CD4-positive, alpha-beta T cell (primary cell): ENCODE measurements at regions of chr3 and their contacts with region 1.

Region 1: GRCh38 chr3:50568947-50569749 is at the start of gene HEMK1:
- DNase-seq: peak; percentile 84 to 97 (median 91)
- ATAC-seq: peak; percentile 64
- H3K4me3 ChIP-seq: peak within 1 kb of the TSS; percentile 77
- H3K4me3 Mint-ChIP-seq: peak within 1 kb of the TSS; percentile 97
- H3K27ac ChIP-seq: peak within 1 kb of the TSS; percentile 80 to 83
- H3K27ac Mint-ChIP-seq: peak within 1 kb of the TSS; percentile 89
- H3K4me1 ChIP-seq: peaks cover 79% of the 10 kb centered on the region
- H3K4me1 Mint-ChIP-seq: peaks cover 78% of the 10 kb centered on the region
- H3K27me3 ChIP-seq: no peaks in the 10 kb centered on the region
- H3K27me3 Mint-ChIP-seq: no peaks in the 10 kb centered on the region
- CTCF ChIP-seq: no peak
- total RNA-seq, gene HEMK1: 12.4 to 14.6 TPM

Region 2: DNA sequence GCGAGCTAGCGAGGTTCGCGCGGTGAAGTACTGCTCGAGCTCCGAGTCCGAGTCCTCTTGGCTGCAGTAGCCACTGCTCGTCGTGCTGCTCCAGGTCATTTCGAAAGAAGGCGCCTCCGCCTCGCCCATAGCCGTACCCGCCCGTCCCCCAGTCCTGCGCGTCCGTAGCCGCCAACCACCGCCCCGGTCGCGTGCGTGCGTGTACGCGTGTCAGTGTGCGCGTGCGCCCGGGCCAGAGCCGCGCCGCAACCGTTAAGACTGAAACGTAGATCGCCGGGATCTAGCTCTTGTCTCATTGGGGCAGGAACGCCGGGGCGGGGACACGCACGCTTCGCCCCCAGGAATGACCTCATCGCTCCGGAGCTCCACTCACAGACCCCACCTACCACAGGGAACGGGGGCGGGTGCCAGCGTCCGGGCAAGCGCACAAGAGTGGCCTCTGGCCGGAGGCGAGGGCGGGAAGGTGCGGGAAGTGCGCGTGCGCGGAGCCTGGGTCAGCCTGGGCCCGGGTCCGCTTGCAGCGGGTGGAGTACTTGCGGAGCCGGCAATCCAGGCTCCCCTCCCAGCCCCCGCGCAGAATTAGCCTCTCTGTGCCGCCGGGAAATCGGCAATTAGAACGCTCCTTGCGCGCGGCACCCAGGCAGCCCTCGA is 231.8 kb before region 1 on chr3:
- CTCF ChIA-PET with region 1: no interaction called
- POLR2A ChIA-PET with region 1: interaction called, 20 read pairs
- intact Hi-C with region 1: no loop called
- DNase-seq: peak; percentile 81 to 98 (median 90)
- ATAC-seq: peak; percentile 77
- H3K4me3 ChIP-seq: peak overlapping the region; percentile 93
- H3K4me3 Mint-ChIP-seq: peak overlapping the region; percentile 96
- H3K27ac ChIP-seq: peak overlapping the region; percentile 95 to 96
- H3K27ac Mint-ChIP-seq: peak overlapping the region; percentile 95
- H3K4me1 ChIP-seq: peaks cover 85% of the 10 kb centered on the region
- H3K4me1 Mint-ChIP-seq: peaks cover 71% of the 10 kb centered on the region
- H3K27me3 ChIP-seq: no peaks in the 10 kb centered on the region
- H3K27me3 Mint-ChIP-seq: no peaks in the 10 kb centered on the region
- CTCF ChIP-seq: no peak

Region 3: DNA sequence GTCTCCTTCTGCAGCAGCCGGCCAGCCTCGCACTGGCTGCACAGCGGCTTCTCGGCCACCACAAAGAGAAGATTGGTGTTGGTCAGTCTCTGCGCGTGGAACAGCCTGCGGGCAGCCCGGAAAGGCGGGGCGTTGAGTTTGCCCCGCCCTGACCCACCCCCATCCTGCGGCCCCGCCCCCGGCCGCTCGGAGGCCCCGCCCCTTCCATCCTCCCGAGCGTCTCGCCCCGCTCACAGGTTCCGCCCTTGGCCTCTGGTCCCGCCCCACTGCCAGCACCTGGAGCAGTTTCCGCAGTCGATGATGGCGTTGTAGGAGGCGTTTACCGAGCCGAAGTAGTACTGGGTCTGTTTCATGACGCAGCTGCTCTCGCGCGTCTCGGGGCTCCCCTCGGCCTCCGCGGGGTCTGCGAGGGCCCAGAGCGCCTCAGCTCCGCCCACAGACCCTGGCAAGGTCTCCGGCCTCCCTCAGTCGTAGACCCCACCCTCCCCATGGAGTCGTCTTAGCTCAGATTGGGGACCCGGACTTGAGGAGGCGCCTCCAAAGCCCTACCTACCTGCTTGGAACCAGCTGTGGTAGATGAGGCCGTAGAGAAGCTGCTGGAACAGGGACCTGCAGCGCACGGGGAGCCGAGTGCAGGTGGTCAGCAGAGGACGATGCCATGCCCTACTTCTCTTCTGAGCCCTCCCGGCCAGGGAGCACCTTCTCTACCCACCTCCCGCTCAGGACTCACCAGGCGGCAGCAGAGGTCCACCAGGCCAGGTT is 203.9 kb before region 1 on chr3:
- CTCF ChIA-PET with region 1: no interaction called
- POLR2A ChIA-PET with region 1: interaction called, 4 read pairs
- intact Hi-C with region 1: loop called in 1 of 2 experiments (anchors 2 kb)
- DNase-seq: peak; percentile 92 to 97 (median 95)
- ATAC-seq: peak; percentile 95
- H3K4me3 ChIP-seq: peak overlapping the region; percentile 73
- H3K4me3 Mint-ChIP-seq: peak overlapping the region; percentile 94
- H3K27ac ChIP-seq: peak overlapping the region; percentile 69 to 81
- H3K27ac Mint-ChIP-seq: peak overlapping the region; percentile 98
- H3K4me1 ChIP-seq: peaks cover 30% of the 10 kb centered on the region
- H3K4me1 Mint-ChIP-seq: peaks cover 25% of the 10 kb centered on the region
- H3K27me3 ChIP-seq: no peaks in the 10 kb centered on the region
- H3K27me3 Mint-ChIP-seq: no peaks in the 10 kb centered on the region
- CTCF ChIP-seq: no peak

Region 4: DNA sequence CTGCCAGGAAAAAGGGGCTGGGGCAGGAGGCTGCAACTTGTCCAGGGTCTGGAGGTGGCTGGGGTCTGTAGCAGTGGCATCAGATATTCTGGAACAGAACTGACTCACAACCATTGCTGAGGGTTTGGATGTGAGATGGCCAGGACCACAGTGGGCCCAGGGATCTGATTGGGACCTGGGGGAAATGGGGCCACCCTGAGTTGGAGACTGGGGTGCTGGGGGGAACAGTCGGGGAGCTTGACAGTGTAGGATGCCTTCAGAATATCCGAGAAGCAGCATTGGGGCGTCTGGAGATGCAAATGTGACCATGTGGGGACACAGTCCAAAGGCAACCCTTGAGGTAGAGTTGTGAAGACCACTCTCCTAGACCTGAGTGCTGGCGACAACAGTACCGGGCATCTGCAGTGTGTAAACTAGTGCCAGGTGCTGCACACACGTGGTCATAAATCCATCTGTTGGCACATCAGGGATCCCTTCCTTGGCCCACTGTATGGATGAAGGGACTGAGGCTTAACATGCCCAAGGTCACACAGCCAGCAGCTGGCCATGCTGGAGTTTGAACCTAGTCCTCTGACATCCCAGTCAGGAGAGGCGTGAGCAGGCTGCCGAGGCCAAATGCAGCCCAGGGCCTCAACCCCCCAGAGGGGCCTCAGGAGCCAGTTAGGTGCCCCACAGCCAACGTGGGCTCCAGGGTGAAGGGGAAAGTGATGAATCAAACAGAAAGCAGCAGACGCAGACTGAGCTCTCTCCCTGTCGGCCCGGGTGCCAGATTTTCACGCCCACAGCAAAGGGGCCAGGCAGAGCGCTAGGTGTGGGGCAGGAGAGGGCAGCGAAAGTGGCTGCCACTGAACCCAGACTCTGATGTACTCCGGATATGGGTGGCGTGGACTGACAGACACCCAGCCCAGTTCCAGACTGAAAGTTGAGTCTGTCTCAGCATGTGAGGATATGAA is 18.9 kb after region 1 on chr3:
- CTCF ChIA-PET with region 1: interaction called, 24 read pairs
- POLR2A ChIA-PET with region 1: interaction called, 69 read pairs
- intact Hi-C with region 1: loop called (anchors 2 kb)
- DNase-seq: peak in 6 of 14 experiments; percentile 45 to 75 (median 55)
- ATAC-seq: peak; percentile 45
- H3K4me3 ChIP-seq: no peak overlapping the region
- H3K4me3 Mint-ChIP-seq: peak overlapping the region; percentile 42
- H3K27ac ChIP-seq: peak overlapping the region in 1 of 2 donors; percentile 58
- H3K27ac Mint-ChIP-seq: peak overlapping the region; percentile 86
- H3K4me1 ChIP-seq: peaks cover 88% of the 10 kb centered on the region
- H3K4me1 Mint-ChIP-seq: peaks cover 49% of the 10 kb centered on the region
- H3K27me3 ChIP-seq: no peaks in the 10 kb centered on the region
- H3K27me3 Mint-ChIP-seq: no peaks in the 10 kb centered on the region
- CTCF ChIP-seq: no peak

Region 5: DNA sequence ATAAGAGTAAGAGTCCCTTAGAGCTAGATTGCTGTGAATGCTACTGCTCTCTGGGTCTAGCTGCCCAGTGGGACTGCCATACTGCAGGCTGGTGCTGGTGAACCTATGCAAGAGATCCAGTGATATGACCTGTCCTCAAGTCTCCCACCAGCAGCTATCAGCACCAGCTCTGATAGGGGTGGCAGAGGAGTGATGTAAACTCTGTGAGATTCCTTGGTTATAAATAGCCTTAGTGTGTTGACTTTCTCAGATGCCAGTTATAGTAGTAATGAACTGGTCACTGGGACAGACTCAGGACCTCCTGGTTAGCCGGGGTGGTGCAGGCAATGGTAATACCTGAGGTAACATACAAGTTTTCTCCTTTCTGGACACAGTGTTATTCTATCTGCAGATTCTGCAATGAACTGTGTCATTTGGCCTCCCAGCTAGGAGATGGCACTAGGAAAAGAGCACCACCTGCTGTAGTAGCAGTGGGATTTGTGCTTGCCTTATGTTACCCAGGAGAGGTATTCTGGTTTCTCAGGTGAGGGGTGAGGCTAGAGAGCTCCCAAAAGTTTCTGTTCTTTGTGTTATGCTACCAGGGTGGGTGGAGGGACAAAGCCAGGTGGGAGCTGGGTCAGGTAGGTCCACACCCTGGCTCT is 621.2 kb after region 1 on chr3:
- CTCF ChIA-PET with region 1: no interaction called
- POLR2A ChIA-PET with region 1: no interaction called
- intact Hi-C with region 1: no loop called
- DNase-seq: peak in 3 of 14 experiments; percentile 16 to 20 (median 17)
- ATAC-seq: no peak
- H3K4me3 ChIP-seq: no peak overlapping the region
- H3K4me3 Mint-ChIP-seq: no peak overlapping the region
- H3K27ac ChIP-seq: no peak overlapping the region
- H3K27ac Mint-ChIP-seq: no peak overlapping the region
- H3K4me1 ChIP-seq: no peaks in the 10 kb centered on the region
- H3K4me1 Mint-ChIP-seq: peaks cover 25% of the 10 kb centered on the region
- H3K27me3 ChIP-seq: no peaks in the 10 kb centered on the region
- H3K27me3 Mint-ChIP-seq: no peaks in the 10 kb centered on the region
- CTCF ChIP-seq: no peak

Region 6: DNA sequence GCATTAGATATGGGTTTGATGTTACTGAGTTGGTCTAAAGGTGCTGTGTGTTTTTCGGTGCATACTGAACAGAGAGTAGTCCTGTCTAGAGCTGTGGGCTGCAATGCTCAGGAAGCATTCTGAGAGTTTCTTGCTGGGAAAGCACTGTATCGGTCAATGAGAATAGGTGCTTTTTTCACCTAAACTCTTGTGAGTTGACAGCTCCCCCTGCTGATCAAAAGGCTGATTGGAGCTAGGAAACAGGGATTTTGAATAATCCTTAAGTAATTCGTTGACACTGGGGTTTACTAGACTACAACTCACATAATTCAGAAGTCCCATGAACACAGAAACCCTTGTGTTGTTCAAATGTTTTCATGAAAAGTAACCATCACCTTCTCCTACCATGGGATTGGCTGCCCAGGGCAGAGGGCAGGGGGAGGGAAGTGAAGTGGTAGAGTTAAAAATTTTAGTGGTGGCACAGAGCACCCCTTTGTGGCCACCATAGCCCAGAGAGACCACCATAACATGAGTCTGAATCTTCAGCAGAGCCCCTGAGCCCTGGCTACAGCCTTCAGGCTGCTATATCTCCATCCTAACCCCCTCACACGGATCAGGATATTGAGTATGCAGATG is 802.9 kb after region 1 on chr3:
- CTCF ChIA-PET with region 1: interaction called, 3 read pairs
- POLR2A ChIA-PET with region 1: no interaction called
- intact Hi-C with region 1: loop called in 1 of 2 experiments (anchors 5 kb)
- DNase-seq: peak in 11 of 14 experiments; percentile 27 to 76 (median 42)
- ATAC-seq: peak; percentile 49
- H3K4me3 ChIP-seq: no peak overlapping the region
- H3K4me3 Mint-ChIP-seq: no peak overlapping the region
- H3K27ac ChIP-seq: no peak overlapping the region
- H3K27ac Mint-ChIP-seq: no peak overlapping the region
- H3K4me1 ChIP-seq: no peaks in the 10 kb centered on the region
- H3K4me1 Mint-ChIP-seq: no peaks in the 10 kb centered on the region
- H3K27me3 ChIP-seq: peaks cover 0 to 3% of the 10 kb centered on the region in 2 experiments
- H3K27me3 Mint-ChIP-seq: no peaks in the 10 kb centered on the region
- CTCF ChIP-seq: peak; percentile 65

Region 7: GRCh38 chr3:51670823-51671733 is 1101.9 kb after region 1 on chr3 and contains the start of gene TEX264:
- CTCF ChIA-PET with region 1: no interaction called
- POLR2A ChIA-PET with region 1: no interaction called
- intact Hi-C with region 1: loop called in 1 of 2 experiments (anchors 5 kb)
- DNase-seq: peak; percentile 88 to 100 (median 95)
- ATAC-seq: peak; percentile 75
- H3K4me3 ChIP-seq: peak within 1 kb of the TSS; percentile 98
- H3K4me3 Mint-ChIP-seq: peak within 1 kb of the TSS; percentile 94
- H3K27ac ChIP-seq: peak within 1 kb of the TSS; percentile 83 to 91
- H3K27ac Mint-ChIP-seq: peak within 1 kb of the TSS; percentile 97
- H3K4me1 ChIP-seq: peaks cover 67% of the 10 kb centered on the region
- H3K4me1 Mint-ChIP-seq: peaks cover 80% of the 10 kb centered on the region
- H3K27me3 ChIP-seq: no peaks in the 10 kb centered on the region
- H3K27me3 Mint-ChIP-seq: no peaks in the 10 kb centered on the region
- CTCF ChIP-seq: no peak
- total RNA-seq, gene TEX264: 24.9 to 25.9 TPM